Cardiac septum (tissue), 1 donor: ENCODE measurements at regions of chr3 and their contacts with region 1.

Region 1: GRCh38 chr3:172710664-172711453 is at the start of gene NCEH1:
- DNase-seq: peak; percentile 96
- total RNA-seq, gene NCEH1: 18.5 TPM

Region 2: DNA sequence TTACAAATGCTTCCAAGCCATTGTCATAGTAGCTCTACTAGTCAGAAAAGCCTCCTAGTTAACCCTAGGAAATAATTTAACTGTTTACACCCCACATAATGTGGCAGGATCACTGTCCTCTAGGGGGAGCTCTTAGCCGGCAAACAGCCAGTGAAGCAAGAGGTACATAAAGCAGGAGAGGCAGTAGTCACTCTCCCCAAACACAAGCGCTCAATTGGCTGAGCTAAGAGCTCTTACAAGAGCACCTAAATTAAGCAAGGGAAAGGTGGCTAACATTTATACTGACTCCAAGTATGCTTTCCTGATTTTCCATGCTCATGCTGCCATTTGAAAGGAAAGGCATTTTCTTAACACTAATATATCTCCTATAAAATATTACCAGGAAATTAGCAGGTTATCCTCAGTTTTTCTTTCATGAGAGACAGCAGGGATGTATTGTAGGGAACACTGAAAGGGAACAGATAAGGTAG is 37.6 kb before region 1 on chr3:
- intact Hi-C with region 1: loop called (anchors 2 kb)
- DNase-seq: no peak

Region 3: DNA sequence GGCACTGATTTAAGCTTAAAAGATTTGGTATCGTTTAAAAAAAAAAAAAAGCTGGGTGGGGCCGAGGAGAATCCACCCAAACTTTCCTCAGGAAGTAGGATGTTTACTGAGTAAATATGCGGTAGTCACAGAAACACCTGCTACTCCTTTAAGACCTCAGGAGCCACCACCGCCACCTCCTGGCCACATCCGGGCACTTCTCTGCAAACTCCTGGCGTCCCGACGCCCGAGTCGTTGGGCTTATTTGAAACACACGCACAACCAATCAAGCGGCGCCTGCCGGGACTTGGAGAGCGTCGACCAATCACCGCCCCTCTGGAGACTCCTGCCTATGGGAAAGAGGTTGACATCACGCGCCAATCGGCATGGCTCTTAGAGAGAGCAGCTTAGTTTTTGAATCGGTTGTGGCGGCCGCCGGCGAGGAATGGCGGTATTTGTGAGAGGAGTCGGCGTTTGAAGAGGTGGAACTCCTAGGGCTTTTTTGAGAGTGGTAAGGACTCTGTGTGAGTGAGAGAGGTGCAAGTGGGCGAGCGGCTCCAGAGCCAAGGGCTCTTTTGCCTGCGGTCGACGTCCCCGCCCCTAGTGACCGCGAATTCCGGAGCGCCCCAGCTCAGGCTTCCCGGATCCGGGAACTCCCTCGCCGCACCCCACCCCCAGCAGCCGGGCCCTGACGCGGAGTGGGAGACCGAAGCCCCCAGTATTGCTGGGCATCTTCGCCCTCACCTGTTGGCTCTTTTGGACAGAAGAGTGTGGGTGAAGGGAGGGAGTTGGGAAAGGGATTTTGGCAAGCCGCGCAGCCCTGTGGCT is 39.7 kb after region 1 on chr3 and contains the start of gene ECT2:
- intact Hi-C with region 1: loop called (anchors 1 kb)
- DNase-seq: peak; percentile 99
- total RNA-seq, gene ECT2: 3.0 TPM